PC-9 (cell line): ENCODE measurements at regions of chr7 and their contacts with region 1.

Region 1: GRCh38 chr7:121107923-121108498 is 119.5 kb downstream of the CPED1 start:
- DNase-seq: peak in 1 of 2 experiments; percentile 62
- H3K4me3 ChIP-seq: no peak overlapping the region
- H3K27ac ChIP-seq: no peak overlapping the region
- H3K4me1 ChIP-seq: peaks cover 14% of the 10 kb centered on the region
- H3K27me3 ChIP-seq: no peaks in the 10 kb centered on the region
- CTCF ChIP-seq: peak; percentile 89

Region 2: GRCh38 chr7:119935418-119936025 is 1172.5 kb before region 1 on chr7:
- CTCF ChIA-PET with region 1: no interaction called
- POLR2A ChIA-PET with region 1: no interaction called
- intact Hi-C with region 1: loop called (anchors 10 kb)
- DNase-seq: no peak
- H3K4me3 ChIP-seq: no peak overlapping the region
- H3K27ac ChIP-seq: no peak overlapping the region
- H3K4me1 ChIP-seq: no peaks in the 10 kb centered on the region
- H3K27me3 ChIP-seq: no peaks in the 10 kb centered on the region
- CTCF ChIP-seq: peak; percentile 70

Region 3: GRCh38 chr7:120583899-120584586 is 524.0 kb before region 1 on chr7:
- CTCF ChIA-PET with region 1: no interaction called
- POLR2A ChIA-PET with region 1: no interaction called
- intact Hi-C with region 1: loop called (anchors 10 kb)
- DNase-seq: peak; percentile 65 to 69
- H3K4me3 ChIP-seq: no peak overlapping the region
- H3K27ac ChIP-seq: no peak overlapping the region
- H3K4me1 ChIP-seq: peaks cover 12% of the 10 kb centered on the region
- H3K27me3 ChIP-seq: no peaks in the 10 kb centered on the region
- CTCF ChIP-seq: no peak

Region 4: DNA sequence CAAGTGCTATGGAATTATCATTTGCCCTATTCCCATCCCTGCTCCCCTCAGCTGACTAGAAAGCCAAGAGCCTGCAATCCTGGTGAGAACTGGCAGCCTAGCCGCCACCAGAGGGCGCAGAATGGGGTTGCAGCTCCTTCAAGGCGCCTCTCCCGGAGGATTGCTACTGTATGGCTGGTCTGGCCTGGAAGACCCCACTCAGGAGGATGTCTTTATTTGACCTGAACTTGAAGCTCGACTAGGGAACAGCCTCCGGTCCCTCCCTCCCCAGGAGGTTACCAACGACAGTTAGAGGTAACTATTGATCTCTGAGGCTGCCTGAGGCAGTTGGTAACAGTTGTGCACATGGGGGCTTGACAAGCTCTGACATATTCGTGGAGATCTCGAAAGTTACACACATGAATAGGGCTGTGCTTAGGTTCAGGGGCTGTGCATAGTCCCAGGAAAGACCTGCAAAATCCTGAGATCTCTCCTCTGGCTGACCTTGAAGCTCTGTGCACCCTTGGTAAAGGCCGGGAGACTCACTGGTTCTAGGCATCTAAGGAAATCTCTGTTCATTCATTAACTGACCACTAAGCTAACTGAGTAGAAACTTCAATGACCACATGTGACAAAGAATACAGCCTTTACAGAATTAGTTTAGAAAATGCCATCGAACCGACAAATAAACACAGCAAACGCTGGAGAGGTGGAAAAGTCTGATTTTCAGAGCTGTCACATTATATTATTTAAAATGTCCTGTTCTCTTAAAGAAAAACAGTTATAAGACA is 315.7 kb before region 1 on chr7:
- CTCF ChIA-PET with region 1: no interaction called
- POLR2A ChIA-PET with region 1: no interaction called
- intact Hi-C with region 1: loop called (anchors 5 kb)
- DNase-seq: peak in 1 of 2 experiments; percentile 57
- H3K4me3 ChIP-seq: no peak overlapping the region
- H3K27ac ChIP-seq: no peak overlapping the region
- H3K4me1 ChIP-seq: no peaks in the 10 kb centered on the region
- H3K27me3 ChIP-seq: no peaks in the 10 kb centered on the region
- CTCF ChIP-seq: peak; percentile 85

Region 5: GRCh38 chr7:120805636-120806388 is 302.2 kb before region 1 on chr7:
- CTCF ChIA-PET with region 1: no interaction called
- POLR2A ChIA-PET with region 1: no interaction called
- intact Hi-C with region 1: loop called (anchors 5 kb)
- DNase-seq: peak in 1 of 2 experiments; percentile 51
- H3K4me3 ChIP-seq: no peak overlapping the region
- H3K27ac ChIP-seq: no peak overlapping the region
- H3K4me1 ChIP-seq: no peaks in the 10 kb centered on the region
- H3K27me3 ChIP-seq: no peaks in the 10 kb centered on the region
- CTCF ChIP-seq: peak; percentile 91

Region 6: DNA sequence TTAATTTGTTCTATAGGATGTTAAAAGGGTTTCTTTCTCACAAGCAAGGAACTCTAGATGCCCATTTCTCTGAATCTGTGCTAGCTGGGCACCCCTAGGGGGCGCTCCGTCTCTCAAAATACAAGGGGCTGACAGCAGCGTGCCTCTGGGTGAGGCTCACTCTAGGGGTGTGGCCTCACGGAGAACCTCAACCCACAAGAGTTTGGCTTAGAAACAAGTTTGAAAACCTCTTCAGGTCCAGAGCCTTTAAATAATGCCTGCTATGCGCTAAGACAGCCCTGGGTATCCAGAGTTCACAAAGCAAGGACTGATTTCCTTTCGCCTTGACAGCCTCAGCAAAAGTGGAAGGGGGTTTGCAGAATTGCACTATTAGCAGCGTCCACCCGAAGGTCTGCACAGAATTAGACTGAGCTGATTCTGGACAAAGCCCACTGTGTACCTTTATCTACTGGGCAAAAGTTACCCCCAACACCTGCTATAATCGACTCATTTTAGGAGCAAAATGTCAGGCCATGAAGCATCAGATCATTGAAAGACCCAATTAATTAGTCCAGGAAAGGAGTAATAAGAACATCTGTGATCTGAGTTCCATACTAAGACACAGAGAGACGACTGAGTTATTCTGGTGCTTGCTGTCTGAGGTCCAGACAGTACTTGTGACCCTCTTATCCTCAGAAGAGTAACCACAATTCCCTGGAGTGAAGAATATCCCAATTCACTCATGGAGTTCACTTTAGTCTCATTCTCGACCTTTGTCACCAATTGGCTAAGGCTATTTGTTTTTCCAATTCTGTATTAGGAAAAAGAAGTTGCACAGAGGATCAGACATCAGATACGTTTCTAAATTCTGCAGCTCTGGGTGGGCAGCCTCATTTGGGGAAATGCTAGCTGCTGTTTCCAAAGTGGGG is 120.1 kb before region 1 on chr7:
- CTCF ChIA-PET with region 1: interaction called, 7 read pairs
- POLR2A ChIA-PET with region 1: interaction called, 6 read pairs
- intact Hi-C with region 1: loop called (anchors 1 kb)
- DNase-seq: peak; percentile 74 to 85
- H3K4me3 ChIP-seq: peak overlapping the region; percentile 74
- H3K27ac ChIP-seq: no peak overlapping the region
- H3K4me1 ChIP-seq: peaks cover 10% of the 10 kb centered on the region
- H3K27me3 ChIP-seq: no peaks in the 10 kb centered on the region
- CTCF ChIP-seq: peak; percentile 95

Region 7: GRCh38 chr7:121180436-121181063 is 72.5 kb after region 1 on chr7:
- CTCF ChIA-PET with region 1: no interaction called
- POLR2A ChIA-PET with region 1: no interaction called
- intact Hi-C with region 1: no loop called
- DNase-seq: no peak
- H3K4me3 ChIP-seq: no peak overlapping the region
- H3K27ac ChIP-seq: no peak overlapping the region
- H3K4me1 ChIP-seq: no peaks in the 10 kb centered on the region
- H3K27me3 ChIP-seq: no peaks in the 10 kb centered on the region
- CTCF ChIP-seq: no peak